ENCODE measurements at regions of chr3 and their contacts with region 1.

Region 1: DNA sequence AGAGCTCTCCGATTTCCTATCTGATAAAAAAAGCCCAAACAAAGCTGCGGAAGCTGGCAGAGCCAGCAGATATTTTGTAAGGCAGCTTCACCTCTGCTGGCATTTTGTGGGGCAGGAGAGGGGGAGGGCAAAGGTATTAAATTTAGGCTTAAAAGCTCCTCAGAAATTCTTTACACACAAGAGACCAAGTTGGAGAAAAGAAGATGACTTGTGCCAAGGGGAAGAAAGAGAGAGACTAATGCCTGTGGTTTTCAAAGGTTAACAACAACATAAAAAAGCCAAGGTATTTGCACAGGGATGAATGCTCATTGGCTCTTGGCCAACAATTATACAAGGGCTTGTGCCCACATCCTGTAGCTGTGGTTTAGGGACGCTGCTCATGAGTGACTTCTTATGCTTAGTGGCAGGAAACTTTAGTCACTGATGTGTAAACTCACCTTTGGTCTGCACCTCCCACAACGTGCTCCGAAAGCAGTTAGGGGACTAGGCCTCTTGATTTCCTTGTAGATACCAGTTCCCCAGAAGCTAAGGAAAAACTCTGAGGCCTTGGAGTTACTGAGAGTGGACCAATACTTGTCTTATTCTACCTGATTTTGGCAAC is 152.9 kb downstream of the TPRG1 start:
- DNase-seq: peak; percentile 93
- H3K4me3 Mint-ChIP-seq: peak overlapping the region; percentile 66
- H3K27ac Mint-ChIP-seq: peak overlapping the region; percentile 98
- H3K4me1 Mint-ChIP-seq: peaks cover 66% of the 10 kb centered on the region
- H3K27me3 Mint-ChIP-seq: no peaks in the 10 kb centered on the region

Region 2: DNA sequence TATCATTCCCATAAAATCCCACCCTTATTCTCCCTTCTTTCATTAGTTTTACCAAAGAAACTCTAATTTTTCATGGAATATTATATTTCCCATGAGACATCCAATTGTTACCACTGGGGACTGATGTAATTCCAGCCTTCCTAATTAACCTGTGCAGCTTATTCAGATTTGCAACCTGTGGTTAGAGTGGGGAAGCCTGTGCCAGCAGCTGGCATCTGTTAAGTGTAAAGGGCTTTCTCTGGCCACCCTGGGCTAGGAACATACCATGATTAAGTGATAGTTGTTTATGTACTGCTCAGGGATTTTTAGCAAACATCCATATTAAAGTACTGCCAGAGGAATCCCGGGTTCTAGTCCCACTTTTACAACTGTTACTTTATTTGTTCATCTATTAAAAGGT is 74.7 kb before region 1 on chr3:
- CTCF ChIA-PET with region 1: no interaction called
- POLR2A ChIA-PET with region 1: no interaction called
- DNase-seq: no peak
- H3K4me3 Mint-ChIP-seq: no peak overlapping the region
- H3K27ac Mint-ChIP-seq: no peak overlapping the region
- H3K4me1 Mint-ChIP-seq: no peaks in the 10 kb centered on the region
- H3K27me3 Mint-ChIP-seq: no peaks in the 10 kb centered on the region

Region 3: DNA sequence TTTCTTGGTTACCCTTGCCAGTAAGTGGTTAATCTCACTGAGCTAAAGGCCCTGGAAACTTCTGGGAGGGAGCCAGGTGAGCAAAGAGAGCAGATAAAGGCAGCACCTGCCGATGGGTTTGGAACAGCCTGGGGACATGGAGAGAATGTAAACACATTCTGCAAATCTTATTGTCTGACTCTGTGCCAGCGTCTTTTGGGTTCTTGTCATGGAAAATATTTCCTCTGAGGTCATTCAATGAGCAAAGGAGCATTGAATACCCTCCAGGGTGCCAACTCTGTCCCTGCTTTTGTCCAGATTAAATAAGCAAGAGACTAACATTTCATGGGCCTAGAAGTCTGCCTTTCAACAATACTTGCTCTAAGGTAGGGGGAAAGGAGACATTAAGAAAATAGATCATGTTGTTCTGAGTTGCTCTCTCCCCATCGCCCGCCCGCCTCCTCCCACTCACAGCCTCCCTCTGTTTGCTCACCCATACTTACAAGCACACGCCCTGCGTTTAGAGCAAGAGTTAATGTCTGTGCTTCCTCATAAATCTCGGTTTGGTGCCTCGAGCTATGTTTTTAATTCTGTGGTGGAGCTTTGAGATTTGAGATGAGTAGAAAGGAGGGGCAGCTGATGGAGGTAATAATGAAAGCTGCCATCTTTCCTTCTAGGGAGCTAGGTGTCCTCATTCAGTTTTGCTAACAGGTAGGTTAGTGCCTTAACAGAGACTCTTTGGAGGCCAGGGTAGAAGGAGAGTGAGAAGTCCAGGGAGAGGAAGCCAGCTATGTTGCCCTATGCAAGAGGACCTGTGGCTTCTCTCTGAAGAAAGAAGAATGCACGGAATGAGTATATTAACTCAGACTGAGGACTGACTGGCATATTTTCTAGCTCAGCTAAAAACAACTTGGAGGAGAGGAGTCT is 19.9 kb before region 1 on chr3:
- CTCF ChIA-PET with region 1: interaction called, 6 read pairs
- POLR2A ChIA-PET with region 1: interaction called, 30 read pairs
- DNase-seq: no peak
- H3K4me3 Mint-ChIP-seq: peak overlapping the region; percentile 20
- H3K27ac Mint-ChIP-seq: peak overlapping the region; percentile 81
- H3K4me1 Mint-ChIP-seq: peaks cover 45% of the 10 kb centered on the region
- H3K27me3 Mint-ChIP-seq: no peaks in the 10 kb centered on the region

Region 4: GRCh38 chr3:189355481-189356201 is 31.0 kb after region 1 on chr3:
- CTCF ChIA-PET with region 1: interaction called, 11 read pairs
- POLR2A ChIA-PET with region 1: interaction called, 29 read pairs
- DNase-seq: peak; percentile 49
- H3K4me3 Mint-ChIP-seq: peak overlapping the region; percentile 13
- H3K27ac Mint-ChIP-seq: peak overlapping the region; percentile 90
- H3K4me1 Mint-ChIP-seq: peaks cover 31% of the 10 kb centered on the region
- H3K27me3 Mint-ChIP-seq: no peaks in the 10 kb centered on the region

Region 5: GRCh38 chr3:189383630-189384029 is 59.0 kb after region 1 on chr3:
- CTCF ChIA-PET with region 1: no interaction called
- POLR2A ChIA-PET with region 1: no interaction called
- DNase-seq: no peak
- H3K4me3 Mint-ChIP-seq: no peak overlapping the region
- H3K27ac Mint-ChIP-seq: no peak overlapping the region
- H3K4me1 Mint-ChIP-seq: no peaks in the 10 kb centered on the region
- H3K27me3 Mint-ChIP-seq: no peaks in the 10 kb centered on the region

Region 6: GRCh38 chr3:189394599-189395121 is 70.0 kb after region 1 on chr3:
- CTCF ChIA-PET with region 1: no interaction called
- POLR2A ChIA-PET with region 1: interaction called, 20 read pairs
- DNase-seq: no peak
- H3K4me3 Mint-ChIP-seq: peak overlapping the region; percentile 47
- H3K27ac Mint-ChIP-seq: peak overlapping the region; percentile 89
- H3K4me1 Mint-ChIP-seq: peaks cover 34% of the 10 kb centered on the region
- H3K27me3 Mint-ChIP-seq: no peaks in the 10 kb centered on the region

Measured in activated CD4-positive, alpha-beta memory T cell treated with anti-CD3 and anti-CD28 coated beads, Interleukin-2, amount 10 ng/mL, durations not matched to agents 7 days and 5 days (primary cell).